ENCODE measurements at regions of chr17 and their contacts with region 1.

Region 1: DNA sequence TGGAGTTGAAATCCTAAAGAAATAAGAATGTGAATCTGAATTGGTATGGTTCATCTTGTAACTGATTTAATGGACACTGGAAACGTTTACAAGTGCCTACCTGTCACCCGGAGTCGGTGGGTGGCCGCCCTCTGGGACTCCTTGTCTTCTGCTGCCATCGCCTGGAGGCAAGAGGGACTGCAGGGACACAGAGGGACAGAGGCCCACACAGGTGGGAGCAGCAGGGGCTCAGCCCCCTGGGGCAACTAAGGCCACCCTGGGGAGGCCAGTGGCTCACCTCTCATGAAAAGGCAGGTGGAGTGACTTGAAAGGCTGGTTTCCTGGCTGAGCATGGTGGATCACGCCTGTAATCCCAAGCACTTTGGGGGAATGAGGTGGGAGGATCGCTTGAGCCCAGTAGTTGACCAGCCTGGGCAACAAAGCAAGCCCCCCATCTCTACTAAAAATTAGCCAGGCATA is 23.2 kb downstream of the TMEM92 start:
- DNase-seq: peak; percentile 42
- ATAC-seq: peak; percentile 97
- H3K4me3 ChIP-seq: no peak overlapping the region
- H3K27ac ChIP-seq: no peak overlapping the region
- H3K4me1 ChIP-seq: no peaks in the 10 kb centered on the region
- H3K27me3 ChIP-seq: no peaks in the 10 kb centered on the region
- CTCF ChIP-seq: peak; percentile 97

Region 2: GRCh38 chr17:50094753-50095619 is 202.4 kb before region 1 on chr17 and contains the start of gene PDK2:
- CTCF ChIA-PET with region 1: interaction called, 4 read pairs
- POLR2A ChIA-PET with region 1: no interaction called
- in situ Hi-C with region 1: no loop called
- intact Hi-C with region 1: loop called (anchors 2 kb)
- DNase-seq: no peak
- ATAC-seq: peak; percentile 89
- H3K4me3 ChIP-seq: peak within 1 kb of the TSS; percentile 73 to 75
- H3K27ac ChIP-seq: peak within 1 kb of the TSS; percentile 86
- H3K4me1 ChIP-seq: peaks cover 32% of the 10 kb centered on the region
- H3K27me3 ChIP-seq: no peaks in the 10 kb centered on the region
- CTCF ChIP-seq: no peak
- total RNA-seq, gene PDK2: 46.0 TPM

Region 3: GRCh38 chr17:50206604-50207293 is 90.7 kb before region 1 on chr17:
- CTCF ChIA-PET with region 1: interaction called, 47 read pairs
- POLR2A ChIA-PET with region 1: no interaction called
- in situ Hi-C with region 1: no loop called
- intact Hi-C with region 1: no loop called
- DNase-seq: no peak
- ATAC-seq: no peak
- H3K4me3 ChIP-seq: no peak overlapping the region
- H3K27ac ChIP-seq: no peak overlapping the region
- H3K4me1 ChIP-seq: peaks cover 19% of the 10 kb centered on the region
- H3K27me3 ChIP-seq: 0 out of 2 replicates have a peak, but pooled peaks cover 2% of the 10 kb centered on the region
- CTCF ChIP-seq: no peak

Region 4: GRCh38 chr17:50269477-50270434 is 27.7 kb before region 1 on chr17:
- CTCF ChIA-PET with region 1: interaction called, 10 read pairs
- POLR2A ChIA-PET with region 1: interaction called, 3 read pairs
- in situ Hi-C with region 1: no loop called
- intact Hi-C with region 1: no loop called
- DNase-seq: peak; percentile 57
- ATAC-seq: peak; percentile 75
- H3K4me3 ChIP-seq: no peak overlapping the region
- H3K27ac ChIP-seq: no peak overlapping the region
- H3K4me1 ChIP-seq: peaks cover 38% of the 10 kb centered on the region
- H3K27me3 ChIP-seq: no peaks in the 10 kb centered on the region
- CTCF ChIP-seq: peak; percentile 93

Region 5: DNA sequence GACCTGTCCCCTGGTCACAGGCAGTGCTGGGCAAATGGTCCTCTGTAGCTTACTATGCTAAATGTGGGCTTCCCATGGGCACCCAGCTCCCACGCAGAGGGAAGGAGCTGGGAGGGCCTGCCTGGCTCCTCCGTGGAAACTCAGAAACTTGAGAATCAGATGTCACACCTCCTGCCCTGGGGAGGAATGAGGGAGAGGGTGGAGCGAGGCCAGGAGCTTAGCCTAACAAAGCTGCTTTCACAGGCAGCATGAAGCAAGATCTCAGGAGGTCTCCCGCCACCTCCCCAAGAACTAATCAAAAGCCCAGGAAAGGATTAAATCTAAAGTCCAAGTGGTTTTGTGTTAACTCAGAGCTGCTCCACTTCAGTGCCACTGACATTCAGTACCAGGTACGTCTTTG is 14.9 kb after region 1 on chr17:
- CTCF ChIA-PET with region 1: interaction called, 4 read pairs
- POLR2A ChIA-PET with region 1: interaction called, 10 read pairs
- in situ Hi-C with region 1: no loop called
- intact Hi-C with region 1: no loop called
- DNase-seq: no peak
- ATAC-seq: no peak
- H3K4me3 ChIP-seq: no peak overlapping the region
- H3K27ac ChIP-seq: no peak overlapping the region
- H3K4me1 ChIP-seq: no peaks in the 10 kb centered on the region
- H3K27me3 ChIP-seq: peaks cover 4% of the 10 kb centered on the region; the same call in 1 of the 2 replicates
- CTCF ChIP-seq: no peak

Region 6: GRCh38 chr17:50361561-50362480 is 64.4 kb after region 1 on chr17:
- CTCF ChIA-PET with region 1: no interaction called
- POLR2A ChIA-PET with region 1: interaction called, 11 read pairs
- in situ Hi-C with region 1: no loop called
- intact Hi-C with region 1: no loop called
- DNase-seq: peak; percentile 43
- ATAC-seq: peak; percentile 76
- H3K4me3 ChIP-seq: no peak overlapping the region
- H3K27ac ChIP-seq: no peak overlapping the region
- H3K4me1 ChIP-seq: peaks cover 7% of the 10 kb centered on the region; the same call in 1 of the 2 replicates
- H3K27me3 ChIP-seq: no peaks in the 10 kb centered on the region
- CTCF ChIP-seq: peak; percentile 92

Region 7: DNA sequence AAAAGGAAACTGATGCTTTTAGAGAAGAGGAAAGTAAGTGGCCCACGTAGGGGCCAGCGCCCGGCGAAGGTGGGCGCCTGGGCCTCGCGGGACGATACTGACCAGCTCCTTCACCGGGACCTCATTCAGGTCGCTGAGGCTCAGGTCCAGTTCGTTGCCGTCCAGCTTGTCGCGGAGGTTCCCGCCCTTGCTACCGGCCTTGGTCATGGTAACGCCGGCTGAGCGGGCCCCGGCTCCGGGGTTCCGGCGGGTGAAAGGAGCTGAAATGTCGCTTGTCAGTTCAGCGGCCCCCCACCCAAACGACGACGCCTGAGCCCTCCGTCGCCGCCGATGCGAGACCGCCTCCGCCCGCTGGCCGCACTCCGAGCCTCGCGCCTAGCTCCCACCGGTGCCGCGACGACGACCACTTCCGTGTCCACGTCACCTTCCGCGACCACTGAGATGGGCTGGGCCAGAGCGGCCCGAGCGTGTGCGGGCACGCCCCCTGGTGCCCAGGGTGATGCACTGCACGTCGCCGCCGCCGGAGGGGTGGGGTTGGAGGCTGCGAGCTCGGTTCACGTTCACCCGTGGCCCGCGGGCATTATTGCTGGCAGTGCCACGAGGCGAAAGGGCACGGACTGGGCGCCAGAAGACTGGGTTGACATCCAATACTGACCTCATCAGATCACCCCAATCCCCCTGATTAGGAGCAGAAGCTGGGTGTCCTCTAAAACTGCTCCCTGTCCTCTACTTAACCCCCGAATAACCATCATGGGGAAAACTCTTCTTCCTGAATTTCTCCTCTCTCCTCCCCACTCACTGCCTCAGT is 99.9 kb after region 1 on chr17 and contains the start of gene LRRC59:
- CTCF ChIA-PET with region 1: interaction called, 10 read pairs
- POLR2A ChIA-PET with region 1: no interaction called
- in situ Hi-C with region 1: no loop called
- intact Hi-C with region 1: no loop called
- DNase-seq: peak; percentile 57
- ATAC-seq: peak; percentile 96
- H3K4me3 ChIP-seq: peak within 1 kb of the TSS; percentile 87 to 100
- H3K27ac ChIP-seq: peak within 1 kb of the TSS; percentile 95
- H3K4me1 ChIP-seq: peaks cover 14% of the 10 kb centered on the region; the same call in 1 of the 2 replicates
- H3K27me3 ChIP-seq: no peaks in the 10 kb centered on the region
- CTCF ChIP-seq: peak; percentile 99
- total RNA-seq, gene LRRC59: 167 TPM